Left cardiac atrium (tissue), 4 donors: ENCODE measurements at regions of chr16 and their contacts with region 1.

Region 1: DNA sequence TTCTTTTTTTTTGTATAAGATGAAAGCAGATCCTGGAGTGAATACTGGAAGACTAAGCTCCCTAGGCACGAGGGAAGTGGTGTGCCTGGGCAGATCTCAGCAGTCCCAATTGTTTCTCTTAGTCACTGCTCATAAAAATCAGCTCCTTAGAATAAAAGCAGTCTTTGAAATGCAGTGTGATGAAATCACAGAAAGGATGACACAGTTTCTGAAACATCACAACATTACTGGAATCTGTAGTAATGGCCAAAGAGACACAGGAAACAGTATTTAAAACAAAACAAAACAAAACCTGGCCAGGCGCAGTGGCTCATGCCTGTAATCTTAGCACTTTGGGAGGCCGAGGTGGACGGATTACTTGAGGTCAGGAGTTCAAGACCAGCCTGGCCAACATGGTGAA is 34.7 kb upstream of the ZFHX3 start:
- DNase-seq: no peak
- ATAC-seq: peak in 1 of 2 donors; percentile 43

Region 2: GRCh38 chr16:72807245-72807644 is 275.4 kb before region 1 on chr16:
- intact Hi-C with region 1: no loop called
- DNase-seq: no peak
- ATAC-seq: no peak

Region 3: GRCh38 chr16:72961121-72961763 is 121.4 kb before region 1 on chr16:
- intact Hi-C with region 1: no loop called
- DNase-seq: no peak
- ATAC-seq: no peak

Region 4: DNA sequence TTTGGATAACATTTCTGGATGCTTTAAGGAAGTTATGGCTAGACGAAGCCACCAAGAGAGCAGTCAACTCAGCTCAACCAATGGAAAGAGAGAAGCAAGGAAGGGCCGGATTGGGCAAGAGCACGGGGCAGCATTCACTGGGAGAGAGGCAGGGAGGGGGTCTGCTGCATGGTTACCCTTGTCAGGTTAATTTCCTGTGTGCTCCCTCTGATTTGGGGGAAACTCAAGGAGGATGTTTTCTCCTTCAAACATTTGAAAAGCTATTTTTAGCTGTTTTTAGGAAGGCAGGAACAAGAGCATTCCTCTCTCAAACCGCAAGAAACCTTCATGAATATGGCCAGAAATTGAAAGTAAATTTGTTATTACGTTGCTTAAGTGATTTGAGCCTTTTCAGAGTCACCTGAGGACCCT is 83.8 kb after region 1 on chr16:
- intact Hi-C with region 1: loop called in 1 of 2 experiments (anchors 10 kb)
- DNase-seq: no peak
- ATAC-seq: peak; percentile 47 to 57